ENCODE measurements at regions of chr19 and their contacts with region 1.

Region 1: DNA sequence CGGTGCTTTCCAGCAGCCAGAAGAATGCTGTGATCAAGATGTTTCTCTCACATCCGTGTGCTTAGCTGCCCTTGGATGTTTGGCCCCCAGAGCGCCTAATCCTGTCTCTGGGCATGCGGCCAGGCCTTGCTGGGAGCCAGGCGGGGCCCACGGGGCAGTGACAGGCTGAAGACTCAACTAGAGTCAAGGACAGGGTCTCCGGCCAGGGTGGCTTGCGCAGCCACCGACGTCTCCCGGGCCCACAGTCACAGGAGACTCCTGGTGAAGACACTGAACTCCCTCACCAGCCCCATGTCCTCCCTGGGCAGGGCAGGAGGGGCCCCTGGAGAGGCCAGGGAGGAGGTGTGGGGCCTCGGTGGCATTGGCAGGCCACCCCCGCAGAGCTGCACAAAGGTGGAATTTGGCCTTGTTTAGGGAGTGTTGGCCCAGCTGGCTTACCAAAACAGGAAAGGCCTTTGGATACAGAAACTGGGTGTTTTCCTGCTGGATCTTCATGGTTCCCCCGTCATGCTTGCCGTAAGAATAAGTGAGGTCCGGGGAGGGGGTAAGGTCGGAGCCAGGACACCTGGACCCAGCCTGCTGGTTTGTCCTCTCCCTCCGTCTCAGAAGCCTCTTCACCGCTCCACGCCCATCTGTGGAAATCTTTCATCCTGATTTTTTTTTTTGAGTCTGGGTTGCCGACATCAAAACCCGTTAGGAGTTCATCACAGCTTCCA is 10.0 kb upstream of the NDUFS7 start:
- DNase-seq: no peak
- ATAC-seq: no peak
- H3K4me3 Mint-ChIP-seq: no peak overlapping the region
- H3K27ac Mint-ChIP-seq: no peak overlapping the region
- H3K4me1 Mint-ChIP-seq: no peaks in the 10 kb centered on the region
- H3K27me3 Mint-ChIP-seq: no peaks in the 10 kb centered on the region
- CTCF ChIP-seq: no peak

Region 2: GRCh38 chr19:1315470-1316231 is 58.0 kb before region 1 on chr19:
- CTCF ChIA-PET with region 1: interaction called, 15 read pairs
- POLR2A ChIA-PET with region 1: no interaction called
- intact Hi-C with region 1: loop called (anchors 1 kb)
- DNase-seq: peak; percentile 40
- ATAC-seq: peak; percentile 72
- H3K4me3 Mint-ChIP-seq: no peak overlapping the region
- H3K27ac Mint-ChIP-seq: no peak overlapping the region
- H3K4me1 Mint-ChIP-seq: no peaks in the 10 kb centered on the region
- H3K27me3 Mint-ChIP-seq: peaks cover 21% of the 10 kb centered on the region
- CTCF ChIP-seq: no peak

Measured in activated B cell treated with CpG ODN at 0.5 μM for 24 hours (primary cell).